ENCODE measurements at regions of chr11 and their contacts with region 1.

Region 1: GRCh38 chr11:111982019-111982464 is 43.2 kb upstream of the DLAT start:
- DNase-seq: peak; percentile 79
- H3K4me3 Mint-ChIP-seq: no peak overlapping the region
- H3K27ac Mint-ChIP-seq: peak overlapping the region; percentile 77
- H3K4me1 Mint-ChIP-seq: peaks cover 19% of the 10 kb centered on the region
- H3K27me3 Mint-ChIP-seq: no peaks in the 10 kb centered on the region
- CTCF ChIP-seq: peak; percentile 73

Region 2: DNA sequence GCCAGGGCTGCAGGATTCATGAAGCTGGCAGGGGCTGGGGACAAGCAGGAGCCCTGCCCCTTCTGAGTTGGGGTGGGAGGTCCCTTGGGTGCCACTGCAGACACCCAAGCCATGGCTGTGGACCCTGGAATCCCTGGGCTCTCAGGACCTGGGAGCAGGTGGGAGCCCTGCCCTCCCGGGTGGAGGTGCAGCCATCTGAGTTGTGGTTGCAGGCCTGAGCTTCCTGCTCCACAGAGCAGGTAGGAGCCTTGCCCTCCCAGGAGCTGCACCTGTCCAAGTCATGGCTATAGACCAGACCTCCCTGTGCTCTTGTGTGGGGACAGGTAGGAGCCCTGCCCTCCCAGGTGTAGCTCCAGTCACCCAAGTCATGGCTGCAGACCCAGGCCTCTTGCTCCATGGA is 1383.3 kb before region 1 on chr11:
- CTCF ChIA-PET with region 1: no interaction called
- POLR2A ChIA-PET with region 1: no interaction called
- intact Hi-C with region 1: no loop called
- DNase-seq: no peak
- H3K4me3 Mint-ChIP-seq: no peak overlapping the region
- H3K27ac Mint-ChIP-seq: no peak overlapping the region
- H3K4me1 Mint-ChIP-seq: no peaks in the 10 kb centered on the region
- H3K27me3 Mint-ChIP-seq: peaks cover 28% of the 10 kb centered on the region
- CTCF ChIP-seq: no peak

Region 3: GRCh38 chr11:111665777-111666176 is 316.3 kb before region 1 on chr11:
- CTCF ChIA-PET with region 1: no interaction called
- POLR2A ChIA-PET with region 1: no interaction called
- intact Hi-C with region 1: loop called (anchors 5 kb)
- DNase-seq: peak; percentile 54
- H3K4me3 Mint-ChIP-seq: no peak overlapping the region
- H3K27ac Mint-ChIP-seq: no peak overlapping the region
- H3K4me1 Mint-ChIP-seq: no peaks in the 10 kb centered on the region
- H3K27me3 Mint-ChIP-seq: no peaks in the 10 kb centered on the region
- CTCF ChIP-seq: no peak

Region 4: DNA sequence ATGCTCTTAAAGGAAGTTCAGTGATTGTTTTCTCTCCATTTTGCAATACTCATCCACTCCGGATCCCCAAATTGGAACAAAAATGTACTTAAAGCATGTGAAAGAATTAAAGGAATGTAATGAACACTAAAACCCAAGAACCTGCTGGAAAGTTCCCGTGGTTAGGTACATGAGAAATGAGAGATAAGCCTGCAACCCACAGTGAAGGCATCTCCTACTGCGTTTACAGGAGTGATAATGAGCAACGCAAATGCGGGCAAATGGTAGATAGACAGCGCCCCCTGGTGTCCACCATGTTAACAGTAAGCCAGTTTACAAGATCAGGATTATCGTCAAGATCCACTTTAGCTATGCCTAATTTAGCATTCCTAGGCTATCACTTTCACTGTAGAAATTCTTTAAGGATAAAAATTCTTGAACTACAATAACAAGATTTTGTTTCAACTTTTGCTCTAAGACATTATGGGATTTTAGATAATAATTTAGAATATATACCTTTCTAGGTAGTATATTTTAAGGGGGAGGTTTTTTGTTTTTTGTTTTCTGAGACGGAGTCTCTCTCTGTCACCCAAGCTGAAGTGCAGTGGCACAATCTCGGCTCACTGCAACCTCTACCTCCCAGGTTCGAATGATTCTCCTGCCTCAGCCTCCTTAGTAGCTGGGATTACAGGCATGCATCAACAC is 140.5 kb before region 1 on chr11:
- CTCF ChIA-PET with region 1: no interaction called
- POLR2A ChIA-PET with region 1: no interaction called
- intact Hi-C with region 1: no loop called
- DNase-seq: peak; percentile 82
- H3K4me3 Mint-ChIP-seq: no peak overlapping the region
- H3K27ac Mint-ChIP-seq: no peak overlapping the region
- H3K4me1 Mint-ChIP-seq: no peaks in the 10 kb centered on the region
- H3K27me3 Mint-ChIP-seq: no peaks in the 10 kb centered on the region
- CTCF ChIP-seq: peak; percentile 79

Region 5: DNA sequence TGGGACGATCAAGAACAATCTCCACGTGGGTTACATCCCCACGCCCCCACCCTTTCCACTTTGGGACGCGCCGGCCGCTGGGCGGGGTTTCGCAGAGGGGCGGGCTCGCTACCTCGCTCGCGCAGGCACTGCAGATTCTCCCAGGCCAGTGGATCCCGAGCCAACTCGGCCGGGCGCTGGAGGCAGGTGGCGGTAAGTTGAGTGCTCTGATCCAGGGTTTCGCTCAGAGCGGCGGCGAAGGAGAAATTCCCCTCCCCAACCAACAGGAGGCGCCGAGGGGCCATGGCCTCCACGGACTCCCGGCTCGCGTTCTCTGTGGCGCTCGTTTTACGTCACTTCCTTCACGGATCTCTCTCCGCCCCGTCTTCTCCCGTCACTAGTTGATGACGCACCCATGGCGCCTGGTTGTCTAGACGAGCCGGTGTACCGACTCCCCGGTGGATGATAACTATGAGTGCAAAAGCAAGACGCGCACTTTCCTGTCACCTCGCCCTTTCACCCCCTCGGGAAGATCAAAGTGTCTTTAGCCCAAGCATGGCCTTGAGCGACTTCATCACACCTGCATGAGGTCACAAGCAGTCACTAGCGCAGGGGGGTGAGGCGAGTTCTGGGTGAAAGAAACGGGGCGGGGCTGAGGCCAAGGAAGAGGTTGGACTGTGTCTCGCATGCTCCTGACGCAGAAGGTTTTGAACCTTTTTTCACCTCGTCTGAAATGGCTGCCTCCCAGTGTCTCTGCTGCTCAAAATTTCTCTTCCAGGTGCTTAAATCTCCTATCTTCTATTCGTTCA is 103.0 kb before region 1 on chr11 and contains the starts of genes CFAP68 and FDXACB1:
- CTCF ChIA-PET with region 1: interaction called, 43 read pairs
- POLR2A ChIA-PET with region 1: interaction called, 13 read pairs
- intact Hi-C with region 1: loop called (anchors 1 kb)
- DNase-seq: peak; percentile 98
- H3K4me3 Mint-ChIP-seq: peak within 1 kb of the TSS; percentile 95
- H3K27ac Mint-ChIP-seq: peak within 1 kb of the TSS; percentile 97
- H3K4me1 Mint-ChIP-seq: peaks cover 6% of the 10 kb centered on the region
- H3K27me3 Mint-ChIP-seq: no peaks in the 10 kb centered on the region
- CTCF ChIP-seq: peak; percentile 94
- total RNA-seq, gene CFAP68: 33.6 and 38.3 TPM in 2 replicates
- total RNA-seq, gene FDXACB1: 0.79 and 1.0 TPM in 2 replicates

Region 6: GRCh38 chr11:111918390-111919258 is 63.4 kb before region 1 on chr11 and contains the start of gene C11orf52:
- CTCF ChIA-PET with region 1: interaction called, 11 read pairs
- POLR2A ChIA-PET with region 1: interaction called, 8 read pairs
- intact Hi-C with region 1: no loop called
- DNase-seq: peak; percentile 76
- H3K4me3 Mint-ChIP-seq: peak within 1 kb of the TSS; percentile 68
- H3K27ac Mint-ChIP-seq: peak within 1 kb of the TSS; percentile 68
- H3K4me1 Mint-ChIP-seq: peaks cover 21% of the 10 kb centered on the region
- H3K27me3 Mint-ChIP-seq: no peaks in the 10 kb centered on the region
- CTCF ChIP-seq: no peak
- total RNA-seq, gene C11orf52: 1.3 and 2.0 TPM in 2 replicates

Region 7: GRCh38 chr11:111960916-111961315 is 21.1 kb before region 1 on chr11:
- CTCF ChIA-PET with region 1: interaction called, 20 read pairs
- POLR2A ChIA-PET with region 1: interaction called, 122 read pairs
- intact Hi-C with region 1: no loop called
- DNase-seq: peak; percentile 89
- H3K4me3 Mint-ChIP-seq: peak overlapping the region; percentile 22
- H3K27ac Mint-ChIP-seq: peak overlapping the region; percentile 74
- H3K4me1 Mint-ChIP-seq: peaks cover 20% of the 10 kb centered on the region
- H3K27me3 Mint-ChIP-seq: no peaks in the 10 kb centered on the region
- CTCF ChIP-seq: no peak